Activated CD8-positive, alpha-beta memory T cell treated with anti-CD3 and anti-CD28 coated beads, Interleukin-2, amount 10 ng/mL, durations not matched to agents 7 days and 5 days (primary cell): ENCODE measurements at regions of chr9 and their contacts with region 1.

Region 1: DNA sequence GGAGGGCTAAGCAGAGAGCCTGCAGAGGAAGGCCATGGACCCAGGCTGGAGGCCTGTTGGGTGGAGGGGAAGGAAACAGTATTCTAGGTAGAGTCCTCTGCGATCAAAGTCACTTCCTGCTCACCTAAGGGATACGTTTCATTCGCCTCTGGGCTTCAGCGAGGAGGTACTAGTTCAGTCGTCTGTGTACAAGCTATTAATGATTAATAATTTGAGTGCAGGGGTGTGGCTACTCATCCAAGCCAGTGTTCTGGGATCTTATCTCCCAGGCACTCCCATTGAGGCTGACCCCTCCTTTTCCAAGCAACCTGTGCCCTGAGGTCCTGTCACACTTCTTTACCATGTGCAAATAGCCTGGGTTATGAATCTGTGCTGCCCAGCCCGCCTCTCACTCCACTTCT is 25.2 kb downstream of the RALGPS1 start:
- DNase-seq: no peak
- ATAC-seq: no peak
- H3K4me3 Mint-ChIP-seq: no peak overlapping the region
- H3K27ac Mint-ChIP-seq: no peak overlapping the region
- H3K4me1 Mint-ChIP-seq: peaks cover 6% of the 10 kb centered on the region
- H3K27me3 Mint-ChIP-seq: peaks cover 14% of the 10 kb centered on the region

Region 2: DNA sequence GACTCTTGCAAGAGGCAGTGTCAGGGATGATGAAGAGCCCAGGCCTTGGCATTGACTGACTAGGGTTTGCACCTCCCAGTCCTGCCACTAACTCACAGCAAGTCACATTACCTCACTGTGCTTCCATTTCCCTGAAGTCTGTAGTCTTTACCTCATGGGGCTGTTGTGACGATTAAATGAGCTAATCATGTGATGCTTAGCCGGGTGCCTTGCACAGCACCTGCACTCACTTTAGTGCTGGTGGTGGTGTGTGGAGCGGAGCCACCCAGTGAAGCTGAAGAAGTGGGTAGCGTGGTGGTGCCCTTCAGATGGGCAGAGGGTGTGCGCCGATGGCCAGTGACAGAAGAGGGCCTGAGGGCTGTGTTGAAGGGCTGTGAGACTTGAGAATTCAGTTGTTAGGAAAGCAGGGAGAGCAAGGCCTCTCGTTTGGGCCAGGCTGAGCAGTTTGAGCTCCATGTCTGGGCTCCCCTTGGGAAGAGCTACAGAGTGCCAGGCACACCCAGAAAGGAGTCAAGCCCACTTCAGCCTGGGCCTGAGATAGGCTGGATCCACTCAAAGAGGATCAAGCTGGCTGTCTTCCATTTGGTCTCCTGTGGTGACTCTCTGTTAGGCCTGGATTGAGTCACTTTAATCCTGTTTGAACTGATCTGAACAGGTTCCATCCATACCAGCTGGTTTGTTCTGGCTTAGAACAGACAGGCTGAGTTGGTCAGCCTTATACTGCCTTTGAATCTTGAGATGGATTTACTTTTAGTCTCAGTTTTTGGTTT is 17.3 kb after region 1 on chr9:
- CTCF ChIA-PET with region 1: interaction called, 10 read pairs
- DNase-seq: no peak
- ATAC-seq: no peak
- H3K4me3 Mint-ChIP-seq: no peak overlapping the region
- H3K27ac Mint-ChIP-seq: no peak overlapping the region
- H3K4me1 Mint-ChIP-seq: peaks cover 2% of the 10 kb centered on the region
- H3K27me3 Mint-ChIP-seq: peaks cover 8% of the 10 kb centered on the region

Region 3: DNA sequence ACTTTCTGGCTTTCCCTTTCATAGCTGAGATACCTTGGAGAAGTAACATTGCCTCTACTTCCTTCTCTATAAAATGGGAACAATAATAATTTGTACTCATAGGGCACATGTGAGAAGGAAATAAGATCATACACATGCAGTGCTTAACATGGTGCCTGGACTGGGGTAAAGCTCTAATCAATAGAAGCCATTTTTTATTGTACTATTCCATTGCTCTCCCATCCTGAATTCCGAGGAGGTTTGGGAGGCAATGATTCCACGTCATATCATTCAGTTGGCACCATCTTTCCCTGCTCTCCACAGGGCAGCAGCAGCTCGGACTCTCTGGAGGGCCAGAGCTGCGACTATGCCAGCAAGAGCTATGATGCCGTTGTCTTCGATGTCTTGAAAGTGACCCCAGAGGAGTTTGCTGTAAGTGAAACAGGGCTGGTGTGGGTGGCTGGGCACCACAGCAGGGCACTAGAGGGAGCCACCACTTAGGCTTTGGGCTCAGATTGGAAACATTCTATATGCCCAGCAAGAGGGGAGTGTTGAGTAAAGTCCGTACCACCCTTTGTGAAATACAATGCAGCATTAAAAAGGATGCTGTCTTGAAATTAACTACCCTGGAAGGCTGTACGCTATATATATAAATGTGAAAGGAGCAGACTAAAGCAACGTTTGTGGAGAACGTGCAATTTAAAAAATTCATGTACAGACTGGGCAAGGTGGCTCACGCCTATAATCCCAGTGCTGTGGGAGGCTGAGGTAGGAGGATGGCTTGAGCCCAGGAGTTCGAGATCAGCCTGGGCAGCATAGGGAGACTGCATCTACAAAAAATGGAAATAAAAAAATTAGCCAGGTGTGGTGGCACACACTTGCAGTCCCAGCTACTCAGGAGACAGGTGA is 26.0 kb after region 1 on chr9:
- CTCF ChIA-PET with region 1: interaction called, 29 read pairs
- DNase-seq: peak; percentile 60
- ATAC-seq: peak; percentile 75
- H3K4me3 Mint-ChIP-seq: no peak overlapping the region
- H3K27ac Mint-ChIP-seq: no peak overlapping the region
- H3K4me1 Mint-ChIP-seq: peaks cover 5% of the 10 kb centered on the region
- H3K27me3 Mint-ChIP-seq: peaks cover 7% of the 10 kb centered on the region

Region 4: DNA sequence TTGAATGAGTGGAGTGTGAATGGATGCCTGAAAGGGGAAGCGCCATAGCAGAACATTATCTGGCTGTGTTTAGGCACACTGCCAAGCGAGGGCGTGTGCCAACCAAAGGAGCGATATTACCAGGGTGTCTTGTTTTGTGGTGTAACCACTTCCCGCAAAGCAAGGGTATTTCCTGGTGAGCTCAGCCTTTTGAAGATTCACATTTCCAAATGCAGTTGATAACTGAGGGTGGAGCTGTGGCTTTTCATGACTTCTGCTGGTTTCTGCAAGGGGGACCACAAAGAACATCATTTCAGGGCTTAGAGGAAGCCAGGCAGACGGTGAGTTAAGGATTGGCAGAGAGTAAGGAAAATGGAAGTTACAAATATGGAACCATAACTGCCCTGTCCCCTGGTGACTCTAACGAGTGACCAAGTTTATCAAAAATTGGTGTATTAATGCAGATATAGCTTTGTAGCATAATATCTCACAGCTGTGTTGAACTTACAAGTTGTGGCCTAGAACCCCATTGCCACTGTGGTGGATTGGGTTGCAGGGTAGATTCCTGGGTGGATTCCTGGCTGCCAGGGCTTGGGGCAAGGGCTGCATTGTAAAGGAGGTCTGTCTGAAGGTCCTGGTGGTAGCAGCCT is 46.2 kb after region 1 on chr9:
- CTCF ChIA-PET with region 1: interaction called, 13 read pairs
- DNase-seq: peak; percentile 93
- ATAC-seq: peak; percentile 71
- H3K4me3 Mint-ChIP-seq: peak overlapping the region; percentile 42
- H3K27ac Mint-ChIP-seq: peak overlapping the region; percentile 85
- H3K4me1 Mint-ChIP-seq: peaks cover 59% of the 10 kb centered on the region
- H3K27me3 Mint-ChIP-seq: peaks cover 18% of the 10 kb centered on the region

Region 5: GRCh38 chr9:127199001-127199791 is 259.4 kb after region 1 on chr9:
- CTCF ChIA-PET with region 1: interaction called, 122 read pairs
- DNase-seq: peak; percentile 85
- ATAC-seq: peak; percentile 79
- H3K4me3 Mint-ChIP-seq: no peak overlapping the region
- H3K27ac Mint-ChIP-seq: no peak overlapping the region
- H3K4me1 Mint-ChIP-seq: peaks cover 5% of the 10 kb centered on the region
- H3K27me3 Mint-ChIP-seq: no peaks in the 10 kb centered on the region

Region 6: GRCh38 chr9:127214421-127215267 is 274.8 kb after region 1 on chr9:
- CTCF ChIA-PET with region 1: interaction called, 10 read pairs
- DNase-seq: peak; percentile 74
- ATAC-seq: peak; percentile 82
- H3K4me3 Mint-ChIP-seq: no peak overlapping the region
- H3K27ac Mint-ChIP-seq: no peak overlapping the region
- H3K4me1 Mint-ChIP-seq: no peaks in the 10 kb centered on the region
- H3K27me3 Mint-ChIP-seq: no peaks in the 10 kb centered on the region